GM12878 (cell line): ENCODE measurements at regions of chr1 and their contacts with region 1.

Region 1: DNA sequence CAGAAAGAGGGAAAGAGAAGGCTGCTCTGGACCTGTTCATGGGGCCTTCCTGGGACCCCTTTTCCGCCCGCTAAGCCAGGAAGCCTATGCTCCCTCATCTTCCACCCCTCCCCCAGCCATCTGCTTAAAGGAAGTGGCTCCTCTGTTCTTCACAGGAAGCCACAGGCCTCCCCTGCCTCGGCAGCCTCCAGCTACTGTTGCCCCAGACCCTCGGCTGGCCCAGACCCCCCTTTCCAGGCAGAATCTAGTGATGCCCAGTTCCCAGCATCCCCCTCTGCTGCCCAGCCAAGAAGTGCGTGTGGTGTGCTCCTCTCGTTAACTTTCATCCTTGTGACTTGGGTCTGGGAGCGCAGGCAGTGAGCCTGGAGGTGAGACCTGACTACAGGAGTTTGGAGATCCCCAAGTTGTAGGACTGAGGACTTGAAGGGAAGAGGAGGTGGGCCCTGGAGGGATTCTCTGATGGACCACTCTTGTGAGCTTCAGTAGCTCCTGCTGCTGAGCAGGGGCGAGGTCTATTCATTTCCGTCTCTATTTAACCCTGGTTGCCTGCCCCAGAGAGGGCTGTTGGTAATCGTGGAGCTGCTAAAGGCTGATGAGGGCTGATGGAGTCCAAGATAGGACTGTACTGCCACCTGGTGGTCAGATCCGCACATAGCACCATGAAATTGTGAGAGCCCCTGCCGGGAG is 9.1 kb downstream of the IFI6 start:
- DNase-seq: peak; percentile 78
- ATAC-seq: peak; percentile 65
- H3K4me3 ChIP-seq: peak overlapping the region; percentile 3; the same call in 1 of the 2 replicates
- H3K27ac ChIP-seq: peak overlapping the region; percentile 90
- H3K4me1 ChIP-seq: peaks cover 43% of the 10 kb centered on the region
- H3K27me3 ChIP-seq: no peaks in the 10 kb centered on the region
- CTCF ChIP-seq: peak; percentile 83 to 85 (median 85)
- EP300 ChIP-seq: no peak
- POLR2A ChIP-seq: peak; percentile 73
- RAD21 ChIP-seq: peak; percentile 97

Region 2: GRCh38 chr1:27201295-27201694 is 461.6 kb before region 1 on chr1:
- CTCF ChIA-PET with region 1: no interaction called
- POLR2A ChIA-PET with region 1: interaction called, 10 read pairs
- RAD21 ChIA-PET with region 1: no interaction called
- SMC1A ChIA-PET with region 1: no interaction called
- in situ Hi-C with region 1: no loop called
- intact Hi-C with region 1: no loop called
- DNase-seq: no peak
- ATAC-seq: no peak
- H3K4me3 ChIP-seq: no peak overlapping the region
- H3K27ac ChIP-seq: no peak overlapping the region
- H3K4me1 ChIP-seq: no peaks in the 10 kb centered on the region
- H3K27me3 ChIP-seq: no peaks in the 10 kb centered on the region
- CTCF ChIP-seq: no peak
- EP300 ChIP-seq: no peak
- POLR2A ChIP-seq: no peak
- RAD21 ChIP-seq: no peak

Region 3: DNA sequence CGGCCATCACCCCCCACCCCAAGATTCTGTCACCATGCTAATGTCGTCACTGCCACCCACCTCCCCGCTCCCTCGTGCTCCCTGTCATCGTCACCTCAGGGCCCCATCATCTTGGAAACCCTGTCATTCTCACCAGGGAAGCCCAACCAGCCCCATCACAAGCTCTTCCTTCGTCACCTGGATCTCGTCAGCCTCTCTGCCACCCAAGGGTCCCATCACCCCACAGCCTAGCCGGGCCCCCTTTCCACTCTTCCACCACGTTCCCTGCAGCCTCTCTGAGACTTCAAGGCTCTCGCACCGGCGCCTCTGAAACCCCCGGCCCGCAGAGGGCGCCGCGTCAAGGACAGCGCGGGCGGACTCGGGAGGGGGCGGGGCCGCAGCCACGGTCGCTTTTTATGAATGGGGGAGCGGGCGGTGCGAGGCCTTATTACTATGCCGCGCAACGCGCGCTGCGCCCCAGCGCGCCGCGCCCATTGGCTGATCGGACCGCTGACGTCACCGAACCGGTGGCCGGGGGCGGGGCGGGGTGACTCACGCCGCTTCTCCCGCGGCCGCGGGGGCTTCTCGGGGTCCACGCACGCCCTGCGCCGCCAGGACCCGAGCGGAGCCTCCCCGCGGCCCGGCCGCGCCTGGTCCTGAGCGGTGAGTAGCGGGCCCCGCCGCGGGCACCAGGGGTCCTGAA is 270.6 kb before region 1 on chr1 and contains the start of gene GPR3:
- CTCF ChIA-PET with region 1: interaction called, 6 read pairs
- POLR2A ChIA-PET with region 1: no interaction called
- RAD21 ChIA-PET with region 1: interaction called, 9 read pairs
- SMC1A ChIA-PET with region 1: interaction called, 6 read pairs
- in situ Hi-C with region 1: loop called (anchors 5 kb)
- intact Hi-C with region 1: loop called (anchors 1 kb)
- DNase-seq: no peak
- ATAC-seq: peak; percentile 89
- H3K4me3 ChIP-seq: peak within 1 kb of the TSS; percentile 71
- H3K27ac ChIP-seq: no peak within 1 kb of the TSS
- H3K4me1 ChIP-seq: peaks cover 8% of the 10 kb centered on the region
- H3K27me3 ChIP-seq: no peaks in the 10 kb centered on the region
- CTCF ChIP-seq: peak; percentile 47 to 61 (median 52)
- EP300 ChIP-seq: no peak
- POLR2A ChIP-seq: no peak
- RAD21 ChIP-seq: peak; percentile 31
- polyA plus RNA-seq, gene GPR3: not detected

Region 4: DNA sequence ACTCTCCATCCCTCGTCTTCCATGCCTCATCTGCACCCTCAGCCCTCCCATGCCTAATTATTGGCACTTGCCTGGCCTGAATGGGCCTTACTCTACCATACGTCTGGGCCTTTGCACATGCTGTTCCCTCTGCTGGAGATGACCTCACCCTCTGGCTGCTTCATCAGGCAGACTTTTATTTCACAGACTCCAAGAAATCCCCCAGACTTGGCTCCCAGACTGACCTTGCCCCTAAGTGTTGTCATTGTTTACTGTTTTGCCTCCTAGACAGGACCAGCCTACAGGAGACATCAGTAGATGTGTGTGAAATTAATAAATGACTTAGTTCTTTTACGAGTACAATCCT is 53.7 kb before region 1 on chr1:
- CTCF ChIA-PET with region 1: interaction called, 327 read pairs
- POLR2A ChIA-PET with region 1: interaction called, 67 read pairs
- RAD21 ChIA-PET with region 1: interaction called, 268 read pairs
- SMC1A ChIA-PET with region 1: interaction called, 248 read pairs
- in situ Hi-C with region 1: loop called (anchors 5 kb)
- intact Hi-C with region 1: loop called (anchors 1 kb)
- DNase-seq: no peak
- ATAC-seq: peak; percentile 41
- H3K4me3 ChIP-seq: no peak overlapping the region
- H3K27ac ChIP-seq: peak overlapping the region; percentile 78
- H3K4me1 ChIP-seq: peaks cover 46% of the 10 kb centered on the region
- H3K27me3 ChIP-seq: no peaks in the 10 kb centered on the region
- CTCF ChIP-seq: no peak
- EP300 ChIP-seq: no peak
- POLR2A ChIP-seq: peak; percentile 57; the same call in 1 of the 2 replicates
- RAD21 ChIP-seq: no peak

Region 5: GRCh38 chr1:27634177-27634984 is 28.5 kb before region 1 on chr1:
- CTCF ChIA-PET with region 1: interaction called, 97 read pairs
- POLR2A ChIA-PET with region 1: interaction called, 141 read pairs
- RAD21 ChIA-PET with region 1: interaction called, 211 read pairs
- SMC1A ChIA-PET with region 1: interaction called, 87 read pairs
- in situ Hi-C with region 1: no loop called
- intact Hi-C with region 1: loop called (anchors 1 kb)
- DNase-seq: no peak
- ATAC-seq: peak; percentile 5
- H3K4me3 ChIP-seq: peak overlapping the region; percentile 66
- H3K27ac ChIP-seq: peak overlapping the region; percentile 95
- H3K4me1 ChIP-seq: peaks cover 69% of the 10 kb centered on the region
- H3K27me3 ChIP-seq: no peaks in the 10 kb centered on the region
- CTCF ChIP-seq: no peak
- EP300 ChIP-seq: 0 out of 4 replicates have a peak, but pooled peaks of 1 of the 2 experiments have one; percentile 22
- POLR2A ChIP-seq: peak; percentile 52
- RAD21 ChIP-seq: no peak

Region 6: GRCh38 chr1:27710574-27710973 is 47.7 kb after region 1 on chr1:
- CTCF ChIA-PET with region 1: no interaction called
- POLR2A ChIA-PET with region 1: no interaction called
- RAD21 ChIA-PET with region 1: no interaction called
- SMC1A ChIA-PET with region 1: no interaction called
- in situ Hi-C with region 1: no loop called
- intact Hi-C with region 1: no loop called
- DNase-seq: no peak
- ATAC-seq: no peak
- H3K4me3 ChIP-seq: no peak overlapping the region
- H3K27ac ChIP-seq: no peak overlapping the region
- H3K4me1 ChIP-seq: no peaks in the 10 kb centered on the region
- H3K27me3 ChIP-seq: no peaks in the 10 kb centered on the region; a peak in 1 of 4 replicates
- CTCF ChIP-seq: no peak
- EP300 ChIP-seq: no peak
- POLR2A ChIP-seq: no peak
- RAD21 ChIP-seq: no peak

Region 7: GRCh38 chr1:27725374-27726173 is 62.7 kb after region 1 on chr1 and contains the start of gene FAM76A:
- CTCF ChIA-PET with region 1: interaction called, 3 read pairs
- POLR2A ChIA-PET with region 1: interaction called, 10 read pairs
- RAD21 ChIA-PET with region 1: interaction called, 51 read pairs
- SMC1A ChIA-PET with region 1: no interaction called
- in situ Hi-C with region 1: no loop called
- intact Hi-C with region 1: no loop called
- DNase-seq: peak; percentile 97
- ATAC-seq: peak; percentile 98
- H3K4me3 ChIP-seq: peak within 1 kb of the TSS; percentile 77
- H3K27ac ChIP-seq: peak within 1 kb of the TSS; percentile 73
- H3K4me1 ChIP-seq: peaks cover 11% of the 10 kb centered on the region
- H3K27me3 ChIP-seq: no peaks in the 10 kb centered on the region
- CTCF ChIP-seq: peak; percentile 37 to 75 (median 39); a peak in 4 of 6 replicates
- EP300 ChIP-seq: no peak
- POLR2A ChIP-seq: peak; percentile 82
- RAD21 ChIP-seq: no peak; the same call in 1 of the 2 replicates
- polyA plus RNA-seq, gene FAM76A: 7.6 to 13.4 TPM